Body of pancreas (tissue), 4 donors: ENCODE measurements at regions of chr4 and their contacts with region 1.

Region 1: DNA sequence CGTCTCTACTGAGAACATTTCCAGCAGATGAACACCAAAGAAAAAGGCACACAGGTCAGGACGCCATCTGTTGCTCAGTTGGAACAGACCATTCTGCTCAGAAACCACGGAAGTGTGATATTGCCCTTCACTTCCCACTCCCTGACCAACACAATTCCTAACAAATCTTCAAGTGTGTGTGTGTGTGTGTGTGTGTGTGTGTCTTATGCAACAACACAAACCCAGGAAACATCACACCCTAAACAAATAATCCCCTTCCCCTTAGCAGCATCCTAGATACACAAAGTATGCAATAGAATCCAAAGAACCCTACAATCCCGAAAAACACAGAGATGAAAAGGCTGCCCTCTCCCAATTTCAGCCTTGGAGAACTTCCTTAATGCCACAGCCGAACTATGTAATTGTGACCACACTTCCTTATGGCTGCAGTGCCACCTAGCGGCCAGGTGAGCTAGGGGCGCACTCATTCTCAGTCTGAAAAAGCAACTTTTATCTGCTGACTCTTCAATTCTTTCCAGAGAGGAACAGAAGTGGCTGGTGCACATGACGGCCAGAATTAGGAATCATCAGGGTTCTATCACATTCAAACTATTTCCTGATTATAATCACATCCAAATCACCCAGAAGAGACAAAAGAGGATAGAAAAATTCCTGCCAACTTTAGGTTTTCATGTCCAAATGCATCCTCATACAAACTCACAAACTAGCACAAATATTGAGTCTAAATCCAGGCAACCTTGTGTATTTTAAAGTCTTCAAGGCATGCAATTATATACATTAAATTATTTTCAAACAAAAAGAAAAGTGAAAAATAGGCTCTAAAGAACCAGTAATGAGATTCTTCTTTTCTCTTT is 164.9 kb downstream of the DHX15 start:
- DNase-seq: peak; percentile 77 to 84 (median 80)
- ATAC-seq: peak; percentile 92
- H3K4me3 ChIP-seq: no peak overlapping the region
- H3K27ac ChIP-seq: no peak overlapping the region
- H3K4me1 ChIP-seq: no peaks in the 10 kb centered on the region
- H3K27me3 ChIP-seq: no peaks in the 10 kb centered on the region
- CTCF ChIP-seq: peak; percentile 78 to 93 (median 91)
- POLR2A ChIP-seq: no peak

Region 2: DNA sequence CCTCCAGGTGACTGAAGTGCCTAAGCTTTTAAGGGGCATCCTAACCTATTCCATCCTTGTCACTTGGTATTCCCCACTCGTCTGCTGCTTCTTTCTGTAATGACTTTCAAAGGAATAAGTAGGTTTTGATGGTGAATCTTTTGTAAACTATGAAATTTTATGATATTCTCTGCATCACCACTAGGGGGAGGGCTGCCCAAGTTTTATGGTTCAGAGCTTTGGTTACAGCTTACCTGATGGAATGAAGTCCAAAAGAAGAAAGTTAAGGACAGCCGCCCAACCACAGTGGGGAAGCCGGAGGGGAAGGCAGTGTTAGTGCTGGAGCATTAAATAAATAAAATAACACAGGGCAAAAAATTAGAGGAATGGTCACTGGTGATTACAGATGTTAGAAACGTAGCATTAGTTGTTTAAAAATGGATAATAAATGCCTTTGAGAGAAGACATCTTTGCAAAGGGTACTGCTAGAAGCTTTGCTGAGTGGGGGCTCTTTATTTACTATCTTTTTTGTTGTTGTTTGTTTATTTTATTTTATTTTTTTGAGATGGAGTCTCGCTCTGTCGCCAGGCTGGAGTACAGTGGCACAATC is 1521.8 kb before region 1 on chr4:
- intact Hi-C with region 1: loop called (anchors 10 kb)
- DNase-seq: peak; percentile 4 to 26 (median 14)
- ATAC-seq: peak; percentile 45
- H3K4me3 ChIP-seq: no peak overlapping the region
- H3K27ac ChIP-seq: no peak overlapping the region
- H3K4me1 ChIP-seq: no peaks in the 10 kb centered on the region
- H3K27me3 ChIP-seq: no peaks in the 10 kb centered on the region
- CTCF ChIP-seq: peak; percentile 59 to 78 (median 67)
- POLR2A ChIP-seq: no peak

Region 3: DNA sequence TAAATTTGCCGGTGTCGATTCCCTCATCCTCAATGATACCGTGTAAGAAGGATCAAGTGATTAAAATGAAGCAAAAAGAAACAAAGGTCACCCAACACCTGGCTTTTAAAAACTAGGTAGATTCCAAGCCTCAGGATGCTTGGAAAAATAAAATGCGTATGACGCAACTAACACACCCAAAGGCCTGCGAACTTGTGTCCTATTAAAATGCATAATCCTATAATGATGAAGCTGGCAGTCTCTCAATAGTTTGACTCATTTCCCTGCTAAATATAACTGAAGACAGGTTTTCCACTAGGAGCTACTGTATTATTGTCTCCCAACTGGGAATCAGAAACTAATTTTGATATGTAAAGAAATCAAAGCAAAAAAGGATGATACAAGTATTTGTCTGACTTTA is 98.3 kb before region 1 on chr4:
- intact Hi-C with region 1: no loop called
- DNase-seq: no peak
- ATAC-seq: no peak
- H3K4me3 ChIP-seq: no peak overlapping the region
- H3K27ac ChIP-seq: no peak overlapping the region
- H3K4me1 ChIP-seq: no peaks in the 10 kb centered on the region
- H3K27me3 ChIP-seq: no peaks in the 10 kb centered on the region
- CTCF ChIP-seq: no peak
- POLR2A ChIP-seq: no peak